ENCODE measurements at regions of chr19 and their contacts with region 1.

Region 1: GRCh38 chr19:39546599-39546998 is 6.6 kb upstream of the EID2 start:
- DNase-seq: peak; percentile 7
- H3K4me3 Mint-ChIP-seq: no peak overlapping the region
- H3K27ac Mint-ChIP-seq: no peak overlapping the region
- H3K4me1 Mint-ChIP-seq: no peaks in the 10 kb centered on the region
- H3K27me3 Mint-ChIP-seq: no peaks in the 10 kb centered on the region
- CTCF ChIP-seq: no peak

Region 2: DNA sequence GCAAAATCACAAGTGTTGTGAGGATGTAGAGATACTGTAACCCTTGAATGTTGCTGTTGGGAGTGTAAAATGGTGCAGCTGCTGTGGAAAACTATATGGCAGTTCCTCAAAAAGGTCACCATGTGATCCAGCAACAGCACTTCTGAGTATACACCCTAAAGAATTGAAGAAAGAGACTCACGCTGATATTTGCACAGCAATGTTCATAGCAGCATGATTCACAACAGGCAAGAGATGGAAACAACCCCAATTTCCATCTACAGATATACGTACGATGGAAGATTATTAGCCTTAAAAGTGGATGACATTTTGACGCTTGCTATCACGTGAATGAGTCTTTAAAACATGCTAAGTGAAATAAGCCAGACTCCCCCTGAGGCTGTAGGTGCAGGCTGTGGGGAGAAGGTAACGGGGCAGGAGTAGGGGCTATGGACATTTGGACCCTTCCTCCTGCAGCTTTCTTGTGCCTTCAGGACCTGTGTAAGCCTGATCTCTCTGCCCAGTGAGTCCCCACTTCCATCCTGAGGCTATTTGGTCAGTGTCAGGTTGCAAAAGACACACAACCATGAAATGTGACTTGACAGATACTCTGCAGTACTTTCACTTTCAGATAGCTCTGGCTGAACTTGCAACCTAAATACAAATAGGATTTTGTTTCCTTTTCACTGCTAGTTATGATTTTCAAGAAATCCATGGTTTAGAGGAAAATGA is 11.0 kb after region 1 on chr19:
- CTCF ChIA-PET with region 1: interaction called, 20 read pairs
- POLR2A ChIA-PET with region 1: no interaction called
- intact Hi-C with region 1: no loop called
- DNase-seq: peak; percentile 20
- H3K4me3 Mint-ChIP-seq: no peak overlapping the region
- H3K27ac Mint-ChIP-seq: no peak overlapping the region
- H3K4me1 Mint-ChIP-seq: peaks cover 6% of the 10 kb centered on the region
- H3K27me3 Mint-ChIP-seq: peaks cover 56% of the 10 kb centered on the region
- CTCF ChIP-seq: no peak

Region 3: DNA sequence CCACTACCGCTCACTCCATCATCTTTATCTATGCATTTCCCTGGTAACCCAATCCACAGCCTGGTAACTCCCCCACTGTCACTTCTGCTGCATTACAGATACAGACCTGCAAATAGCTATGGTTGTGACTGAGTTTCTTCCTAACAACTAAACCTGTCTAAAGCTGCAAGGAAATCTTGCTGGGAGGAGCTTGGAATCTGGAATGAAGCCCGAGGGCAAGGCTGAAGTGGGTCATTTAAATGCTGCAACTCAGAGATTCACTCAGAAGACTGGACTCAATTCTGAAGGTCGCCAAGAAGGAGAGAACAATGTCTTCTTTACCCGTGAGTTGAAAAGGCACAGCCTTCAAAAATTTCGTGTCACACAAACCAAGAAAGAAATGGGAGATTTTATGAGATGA is 55.7 kb after region 1 on chr19 and contains the start of gene LGALS13:
- CTCF ChIA-PET with region 1: no interaction called
- POLR2A ChIA-PET with region 1: no interaction called
- intact Hi-C with region 1: no loop called
- DNase-seq: no peak
- H3K4me3 Mint-ChIP-seq: no peak within 1 kb of the TSS
- H3K27ac Mint-ChIP-seq: no peak within 1 kb of the TSS
- H3K4me1 Mint-ChIP-seq: no peaks in the 10 kb centered on the region
- H3K27me3 Mint-ChIP-seq: peaks cover 80% of the 10 kb centered on the region
- CTCF ChIP-seq: no peak
- total RNA-seq, gene LGALS13: not detected in 2 replicates